Heart right ventricle (tissue), 16 donors: ENCODE measurements at regions of chr11 and their contacts with region 1.

Region 1: DNA sequence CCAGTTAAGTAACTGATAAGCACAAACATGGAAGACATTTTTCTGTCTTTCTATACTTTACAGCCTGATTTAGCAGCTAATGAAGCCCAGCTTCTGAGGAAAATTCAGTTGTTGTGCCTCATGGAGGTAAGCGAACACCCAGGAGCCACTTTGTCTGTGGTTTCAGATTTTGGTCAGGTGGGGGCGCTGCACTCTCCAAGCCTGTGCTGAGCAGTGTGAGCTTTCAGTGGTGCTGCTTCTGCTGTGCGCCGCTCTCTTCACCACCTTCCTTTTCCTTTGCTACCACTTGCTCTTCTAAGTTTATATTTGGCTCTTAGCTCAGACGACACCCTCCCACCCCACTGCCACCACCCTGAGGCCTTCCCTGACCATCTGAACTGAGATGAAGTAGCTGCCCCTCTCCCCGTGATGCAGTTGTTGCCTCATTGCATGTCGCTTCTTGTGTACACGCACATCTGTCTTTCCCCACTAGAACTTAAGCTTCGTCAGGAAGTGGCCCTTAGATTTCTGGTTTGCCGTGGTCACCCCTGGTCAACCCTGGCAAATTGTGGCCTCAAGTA is 14.0 kb downstream of the PSMD13 start:
- DNase-seq: peak; percentile 44 to 48
- ATAC-seq: peak in 6 of 8 donors; percentile 71 to 86 (median 78)
- H3K4me3 ChIP-seq: no peak overlapping the region
- H3K27ac ChIP-seq: no peak overlapping the region
- H3K4me1 ChIP-seq: no peaks in the 10 kb centered on the region
- H3K27me3 ChIP-seq: no peaks in the 10 kb centered on the region
- CTCF ChIP-seq: peak; percentile 31 to 76 (median 61)

Region 2: DNA sequence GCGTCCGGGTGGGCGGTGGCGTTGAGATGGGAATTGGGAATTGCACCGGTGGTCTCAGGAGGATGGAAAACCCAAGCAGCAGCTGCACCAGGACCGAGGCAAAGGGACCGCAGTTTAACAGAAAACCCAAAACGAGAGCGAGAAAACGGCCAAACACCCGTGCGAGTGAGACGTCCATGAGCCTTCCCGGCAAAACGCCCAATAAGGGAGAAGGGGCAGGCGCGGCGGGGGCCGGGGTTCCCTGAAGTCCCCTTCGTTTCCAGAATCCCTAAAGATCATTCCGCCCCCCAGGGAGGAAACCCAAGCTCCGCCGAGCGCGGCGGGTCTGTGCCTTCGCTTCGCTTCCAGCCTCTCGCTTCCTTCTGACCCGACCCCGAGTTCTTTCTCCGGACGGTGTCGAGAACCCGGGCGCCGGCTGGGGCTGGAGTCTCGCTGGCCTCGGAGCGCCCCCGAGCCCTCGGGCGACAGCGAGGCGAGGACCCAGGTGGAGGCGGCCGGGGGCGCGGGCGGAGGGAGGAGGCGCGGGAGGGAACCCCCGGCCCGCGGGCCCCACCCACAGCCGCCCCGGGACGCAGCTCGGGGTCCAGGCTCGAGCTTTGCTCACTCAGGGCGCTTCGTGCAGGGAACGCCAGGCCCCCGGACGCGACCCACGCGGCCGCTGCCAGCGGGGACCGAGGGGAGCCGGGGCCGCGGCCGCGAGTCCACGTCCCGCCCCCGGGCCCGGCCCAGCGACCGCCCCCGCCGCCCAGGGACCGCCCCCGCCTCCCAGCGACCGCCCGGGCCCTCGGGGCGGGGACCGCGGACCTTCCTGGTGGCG is 37.7 kb after region 1 on chr11 and contains the start of gene PGGHG:
- intact Hi-C with region 1: loop called in 1 of 10 experiments (anchors 5 kb)
- DNase-seq: peak; percentile 82 to 88
- ATAC-seq: peak; percentile 80 to 93 (median 86)
- H3K4me3 ChIP-seq: peak within 1 kb of the TSS; percentile 58 to 82 (median 70)
- H3K27ac ChIP-seq: peak within 1 kb of the TSS; percentile 37 to 87 (median 80)
- H3K4me1 ChIP-seq: peaks cover 3 to 20% (median 18%) of the 10 kb centered on the region in 9 donors
- H3K27me3 ChIP-seq: peaks cover 0 to 46% (median 36%) of the 10 kb centered on the region in 7 donors
- CTCF ChIP-seq: no peak
- total RNA-seq, gene PGGHG: 3.3 to 10.8 (median 5.9) TPM

Region 3: DNA sequence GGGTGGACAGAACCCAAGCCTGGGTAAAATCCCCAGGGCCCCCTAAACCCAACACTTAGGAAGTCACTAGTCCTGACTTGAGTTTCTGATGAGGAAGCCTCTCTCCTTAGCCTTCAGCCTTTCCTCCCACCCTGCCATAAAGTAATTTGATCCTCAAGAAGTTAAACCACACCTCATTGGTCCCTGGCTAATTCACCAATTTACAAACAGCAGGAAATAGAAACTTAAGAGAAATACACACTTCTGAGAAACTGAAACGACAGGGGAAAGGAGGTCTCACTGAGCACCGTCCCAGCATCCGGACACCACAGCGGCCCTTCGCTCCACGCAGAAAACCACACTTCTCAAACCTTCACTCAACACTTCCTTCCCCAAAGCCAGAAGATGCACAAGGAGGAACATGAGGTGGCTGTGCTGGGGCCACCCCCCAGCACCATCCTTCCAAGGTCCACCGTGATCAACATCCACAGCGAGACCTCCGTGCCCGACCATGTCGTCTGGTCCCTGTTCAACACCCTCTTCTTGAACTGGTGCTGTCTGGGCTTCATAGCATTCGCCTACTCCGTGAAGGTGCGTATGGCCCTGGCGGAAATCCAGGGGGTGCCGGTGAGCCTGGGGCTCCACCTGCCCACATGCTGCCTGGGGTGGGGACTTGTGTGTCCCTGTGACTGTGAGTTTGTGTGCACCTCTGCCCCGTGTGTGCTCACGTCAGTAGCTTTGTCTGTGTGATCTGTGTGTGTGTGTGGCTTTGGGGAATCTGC is 63.1 kb after region 1 on chr11 and contains the start of gene IFITM1:
- intact Hi-C with region 1: loop called in 1 of 10 experiments (anchors 10 kb)
- DNase-seq: peak; percentile 22 to 65
- ATAC-seq: peak; percentile 5 to 51 (median 29)
- H3K4me3 ChIP-seq: peak within 1 kb of the TSS; percentile 55 to 85 (median 75)
- H3K27ac ChIP-seq: peak within 1 kb of the TSS; percentile 83 to 99 (median 94)
- H3K4me1 ChIP-seq: peaks cover 6 to 60% (median 40%) of the 10 kb centered on the region in 9 donors
- H3K27me3 ChIP-seq: peaks cover 0 to 25% (median 12%) of the 10 kb centered on the region in 7 donors
- CTCF ChIP-seq: no peak
- total RNA-seq, gene IFITM1: 51.6 to 182 (median 94.9) TPM

Region 4: DNA sequence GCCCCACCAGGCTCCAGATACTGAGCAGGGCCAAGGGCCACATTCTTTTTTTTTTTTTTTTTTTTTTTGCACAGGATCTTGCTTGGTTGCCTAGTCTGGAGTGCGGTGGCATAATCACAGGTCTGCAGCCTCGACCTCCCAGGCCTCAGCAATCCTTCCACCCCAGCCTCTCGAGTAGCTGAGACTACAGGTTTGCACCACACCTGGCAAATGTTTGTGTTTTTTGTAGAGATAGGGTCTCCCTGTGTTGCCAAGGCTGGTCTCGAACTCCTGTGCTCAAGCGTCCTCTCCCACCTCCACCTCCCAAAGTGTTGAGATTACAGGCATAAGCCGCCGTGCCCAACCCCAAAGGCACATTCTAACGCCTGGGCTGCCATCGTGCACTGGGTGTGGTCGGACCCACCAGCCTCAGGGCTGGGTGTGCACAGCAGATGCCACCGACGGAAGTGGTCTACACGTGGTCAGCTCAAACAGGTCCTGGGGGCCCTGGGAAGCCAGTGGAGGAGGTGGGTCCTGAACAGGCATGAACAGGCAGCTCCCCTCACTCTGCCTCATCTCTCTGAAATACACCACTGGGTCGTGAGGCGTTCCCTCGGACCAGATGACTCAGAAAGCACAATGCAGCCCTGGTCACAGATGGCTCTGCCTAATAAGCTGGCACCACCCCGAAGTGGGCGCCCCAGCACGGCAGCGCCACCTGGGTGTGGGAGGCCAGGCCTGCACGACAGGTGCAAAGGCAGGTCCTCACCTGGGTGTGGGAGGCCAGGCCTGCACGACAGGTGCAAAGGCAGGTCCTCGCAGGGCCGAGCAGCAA is 113.3 kb after region 1 on chr11:
- intact Hi-C with region 1: loop called in 3 of 10 experiments (anchors 5 to 10 kb)
- DNase-seq: no peak
- ATAC-seq: peak in 4 of 8 donors; percentile 25 to 57 (median 38)
- H3K4me3 ChIP-seq: no peak overlapping the region
- H3K27ac ChIP-seq: no peak overlapping the region
- H3K4me1 ChIP-seq: peaks cover 0 to 10% (median 8%) of the 10 kb centered on the region in 9 donors
- H3K27me3 ChIP-seq: peaks cover 8 to 52% (median 50%) of the 10 kb centered on the region in 7 donors
- CTCF ChIP-seq: peak in 3 of 9 donors; percentile 4 to 39 (median 12)

Region 5: DNA sequence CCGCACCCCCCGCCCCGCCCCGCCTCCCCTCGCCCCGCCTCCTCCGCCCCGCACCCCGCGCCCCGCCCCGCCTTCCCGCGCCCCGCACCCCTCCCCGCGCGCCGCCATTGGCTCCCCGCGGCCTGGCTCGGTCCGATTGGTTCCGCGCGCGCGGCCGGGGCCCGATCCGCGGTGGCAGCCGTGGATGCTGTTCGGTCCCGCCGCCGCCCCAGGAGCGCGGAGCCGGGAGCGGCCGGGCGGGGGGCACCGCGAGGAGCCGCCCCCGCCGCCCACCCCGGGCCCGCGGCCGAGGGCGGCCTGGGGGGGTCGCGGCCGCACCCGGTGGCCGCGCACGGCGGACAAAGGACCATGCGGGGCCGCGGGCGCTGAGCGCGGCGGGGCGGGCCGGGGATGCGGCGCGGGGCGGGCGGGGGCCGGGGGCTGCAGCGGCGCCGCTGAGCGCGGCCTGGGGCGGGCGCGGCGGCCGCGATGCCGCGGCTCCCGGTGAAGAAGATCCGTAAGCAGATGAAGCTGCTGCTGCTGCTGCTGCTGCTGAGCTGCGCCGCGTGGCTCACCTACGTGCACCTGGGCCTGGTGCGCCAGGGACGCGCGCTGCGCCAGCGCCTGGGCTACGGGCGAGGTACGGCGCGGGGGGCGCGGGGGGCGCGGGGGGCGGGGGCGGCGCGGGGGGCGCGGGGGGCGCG is 118.7 kb after region 1 on chr11 and contains the start of gene B4GALNT4:
- intact Hi-C with region 1: loop called in 3 of 10 experiments (anchors 10 kb)
- DNase-seq: no peak
- ATAC-seq: peak in 2 of 8 donors; percentile 46 to 49
- H3K4me3 ChIP-seq: peak within 1 kb of the TSS in 6 of 10 donors; percentile 11 to 28 (median 21)
- H3K27ac ChIP-seq: no peak within 1 kb of the TSS
- H3K4me1 ChIP-seq: peaks cover 0 to 10% (median 8%) of the 10 kb centered on the region in 9 donors
- H3K27me3 ChIP-seq: peaks cover 2 to 65% (median 57%) of the 10 kb centered on the region in 7 donors
- CTCF ChIP-seq: no peak
- total RNA-seq, gene B4GALNT4: 0.09 to 1.6 (median 0.25) TPM in 7 of 10 donors, not detected in the others

Region 6: DNA sequence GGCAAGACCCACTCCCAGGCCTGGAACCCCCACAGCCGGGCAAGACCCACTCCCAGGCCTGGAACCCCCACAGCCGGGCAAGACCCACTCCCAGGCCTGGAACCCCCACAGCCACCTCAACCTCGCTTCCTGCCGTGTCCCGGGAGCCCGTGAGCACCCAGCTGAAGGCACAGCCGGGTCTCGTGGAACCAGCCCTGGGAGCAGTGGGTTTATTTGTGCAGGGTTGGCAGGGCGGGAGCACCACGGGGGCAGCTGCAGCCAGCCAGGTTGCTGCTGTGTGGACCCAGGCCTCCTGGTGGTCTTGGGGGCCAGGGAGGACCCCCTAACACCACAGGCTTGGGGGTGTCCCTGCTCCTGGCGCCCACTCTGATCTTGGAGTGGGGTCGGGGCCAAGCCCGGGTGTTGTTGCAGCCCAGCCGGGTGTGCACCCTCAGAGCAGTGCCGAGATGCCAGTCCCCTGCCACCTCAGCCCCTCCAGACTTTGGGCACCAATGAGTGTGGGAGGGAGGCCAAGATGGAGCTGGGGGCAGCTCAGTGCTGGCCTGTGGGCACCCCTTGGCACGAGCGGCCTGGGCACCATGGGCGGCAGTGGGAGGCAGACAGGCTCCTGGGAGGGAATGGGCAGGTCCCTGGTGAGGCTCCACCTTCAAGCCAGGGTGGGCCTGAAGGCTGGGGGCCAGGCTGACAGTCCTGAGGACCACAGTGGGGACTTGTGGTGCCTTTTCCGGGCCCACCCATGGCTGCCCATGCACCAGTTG is 135.0 kb after region 1 on chr11:
- intact Hi-C with region 1: no loop called
- DNase-seq: no peak
- ATAC-seq: no peak
- H3K4me3 ChIP-seq: no peak overlapping the region
- H3K27ac ChIP-seq: no peak overlapping the region
- H3K4me1 ChIP-seq: no peaks in the 10 kb centered on the region
- H3K27me3 ChIP-seq: peaks cover 0 to 21% (median 6%) of the 10 kb centered on the region in 7 donors
- CTCF ChIP-seq: no peak